Activated CD4-positive, alpha-beta memory T cell treated with anti-CD3 and anti-CD28 coated beads, Interleukin-2, amount 10 ng/mL, durations not matched to agents 7 days and 5 days (primary cell): ENCODE measurements at regions of chr3 and their contacts with region 1.

Region 1: DNA sequence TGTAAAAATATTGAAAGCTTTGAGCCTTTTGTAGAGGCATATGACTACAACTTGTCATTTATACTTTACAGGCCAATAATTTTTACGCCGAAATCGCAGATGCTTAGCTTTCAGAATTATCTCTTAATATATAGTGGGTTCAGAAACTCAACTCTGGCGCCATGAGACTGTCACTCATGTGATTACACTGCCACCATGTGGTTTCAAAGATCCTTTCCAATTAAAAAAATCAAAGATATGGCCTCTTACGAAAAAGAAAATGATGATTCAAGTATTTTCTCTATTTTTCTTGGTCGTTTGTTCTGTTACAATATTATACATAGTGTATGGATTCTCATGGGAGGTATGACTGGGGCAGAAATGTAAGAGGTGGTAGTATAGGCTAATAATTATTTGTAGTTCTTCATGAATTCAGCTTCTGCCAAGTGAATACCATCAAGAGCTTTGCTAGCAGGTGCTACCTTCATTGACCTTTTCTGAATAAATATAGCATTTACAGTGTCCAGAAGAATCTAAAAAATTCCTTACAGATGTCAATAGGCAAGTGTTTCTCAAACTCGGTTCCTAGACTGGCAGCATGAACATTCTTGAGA is 751.7 kb upstream of the GOLIM4 start:
- DNase-seq: no peak
- H3K4me3 Mint-ChIP-seq: no peak overlapping the region
- H3K27ac Mint-ChIP-seq: no peak overlapping the region
- H3K4me1 Mint-ChIP-seq: no peaks in the 10 kb centered on the region
- H3K27me3 Mint-ChIP-seq: no peaks in the 10 kb centered on the region

Region 2: DNA sequence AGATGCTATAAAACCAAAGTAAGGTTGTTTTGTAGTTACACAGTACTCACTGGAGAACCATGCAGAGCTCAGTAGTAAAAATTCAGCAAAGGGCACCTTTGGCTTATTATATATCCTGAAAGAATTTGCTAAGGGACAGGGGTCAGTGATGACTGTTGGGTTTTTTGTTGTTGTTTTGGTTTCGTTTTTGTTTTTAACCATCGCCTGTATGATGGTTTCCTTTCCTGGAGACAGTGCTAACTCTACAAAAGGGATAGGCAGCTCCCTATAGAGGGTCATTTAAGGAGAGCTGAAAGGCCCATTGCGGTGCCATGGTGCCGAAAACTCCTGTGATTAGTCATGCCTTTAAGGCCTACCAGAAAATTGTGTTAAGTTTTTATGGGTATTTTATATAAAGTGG is 633.5 kb before region 1 on chr3:
- CTCF ChIA-PET with region 1: interaction called, 16 read pairs
- POLR2A ChIA-PET with region 1: no interaction called
- DNase-seq: no peak
- H3K4me3 Mint-ChIP-seq: peak overlapping the region; percentile 58
- H3K27ac Mint-ChIP-seq: peak overlapping the region; percentile 24
- H3K4me1 Mint-ChIP-seq: peaks cover 15% of the 10 kb centered on the region
- H3K27me3 Mint-ChIP-seq: peaks cover 3% of the 10 kb centered on the region

Region 3: DNA sequence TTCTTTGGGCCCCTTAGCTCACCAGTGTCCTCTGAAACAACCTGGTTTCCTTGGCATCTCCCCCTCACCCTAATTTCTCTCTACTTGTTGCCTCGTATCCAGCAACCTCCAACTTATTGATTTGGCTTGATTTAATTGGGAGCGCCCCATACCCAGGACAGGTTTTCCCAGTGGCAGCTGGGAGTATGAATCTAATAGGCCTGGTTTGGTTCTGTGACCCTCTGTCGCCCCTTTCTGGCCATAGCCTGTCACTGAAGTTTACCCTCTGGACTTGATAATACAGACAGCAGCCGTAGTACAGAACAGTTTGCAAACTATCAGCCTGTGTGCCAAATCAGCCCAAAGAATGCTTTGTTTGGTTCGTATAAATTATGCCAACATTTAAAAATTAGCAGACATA is 226.6 kb before region 1 on chr3:
- CTCF ChIA-PET with region 1: no interaction called
- POLR2A ChIA-PET with region 1: no interaction called
- DNase-seq: no peak
- H3K4me3 Mint-ChIP-seq: no peak overlapping the region
- H3K27ac Mint-ChIP-seq: no peak overlapping the region
- H3K4me1 Mint-ChIP-seq: no peaks in the 10 kb centered on the region
- H3K27me3 Mint-ChIP-seq: no peaks in the 10 kb centered on the region